ENCODE measurements at regions of chr4 and their contacts with region 1.

Region 1: DNA sequence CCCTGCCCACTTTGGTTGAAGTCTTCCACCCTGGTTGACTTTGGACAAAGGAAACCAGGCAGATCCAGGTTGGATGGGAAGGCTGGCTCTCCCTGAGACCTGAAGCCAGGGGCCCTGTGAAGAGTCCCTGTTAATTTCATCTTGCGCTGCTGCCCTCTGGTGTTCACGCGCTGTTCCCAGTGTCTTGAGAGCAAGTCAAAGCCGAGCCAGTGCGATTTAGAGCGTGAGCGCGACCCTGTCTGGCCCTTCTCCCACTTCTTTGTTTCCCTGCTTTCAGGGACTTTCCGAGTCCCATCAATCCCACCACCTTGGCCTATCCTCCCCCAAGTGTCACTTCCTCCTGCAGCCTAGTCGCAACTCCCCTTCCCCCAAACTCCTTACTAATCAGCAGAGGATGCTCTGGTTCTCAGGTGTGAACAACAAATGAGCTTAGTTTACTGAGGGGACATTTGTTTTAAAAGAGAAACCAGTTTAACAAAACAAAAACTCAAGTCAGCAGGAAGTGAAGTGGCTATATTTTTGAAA is 25.8 kb upstream of the CHRNA9 start:
- DNase-seq: peak; percentile 84 to 93 (median 86)
- H3K4me3 ChIP-seq: peak overlapping the region in 1 of 2 donors; percentile 43
- H3K4me3 Mint-ChIP-seq: peak overlapping the region; percentile 74 to 92 (median 85)
- H3K27ac ChIP-seq: peak overlapping the region; percentile 74
- H3K27ac Mint-ChIP-seq: peak overlapping the region; percentile 93 to 99 (median 98)
- H3K4me1 ChIP-seq: peaks cover 79% of the 10 kb centered on the region
- H3K4me1 Mint-ChIP-seq: peaks cover 57 to 82% (median 67%) of the 10 kb centered on the region in 4 donors
- H3K27me3 ChIP-seq: no peaks in the 10 kb centered on the region
- H3K27me3 Mint-ChIP-seq: no peaks in the 10 kb centered on the region

Region 2: GRCh38 chr4:39638354-39639240 is 670.7 kb before region 1 on chr4 and contains the start of gene SMIM14:
- CTCF ChIA-PET with region 1: no interaction called
- POLR2A ChIA-PET with region 1: no interaction called
- intact Hi-C with region 1: no loop called
- DNase-seq: peak; percentile 84 to 91 (median 86)
- H3K4me3 ChIP-seq: peak within 1 kb of the TSS; percentile 52 to 95
- H3K4me3 Mint-ChIP-seq: peak within 1 kb of the TSS; percentile 87 to 99 (median 92)
- H3K27ac ChIP-seq: peak within 1 kb of the TSS; percentile 77
- H3K27ac Mint-ChIP-seq: peak within 1 kb of the TSS; percentile 74 to 98 (median 96)
- H3K4me1 ChIP-seq: peaks cover 27% of the 10 kb centered on the region
- H3K4me1 Mint-ChIP-seq: peaks cover 20 to 54% (median 32%) of the 10 kb centered on the region in 4 donors
- H3K27me3 ChIP-seq: no peaks in the 10 kb centered on the region
- H3K27me3 Mint-ChIP-seq: no peaks in the 10 kb centered on the region
- total RNA-seq, gene SMIM14: 15.5 to 19.4 TPM

Region 3: GRCh38 chr4:39977489-39978377 is 331.6 kb before region 1 on chr4 and contains the start of gene PDS5A:
- CTCF ChIA-PET with region 1: no interaction called
- POLR2A ChIA-PET with region 1: no interaction called
- intact Hi-C with region 1: loop called (anchors 5 kb)
- DNase-seq: peak; percentile 86 to 95 (median 91)
- H3K4me3 ChIP-seq: peak within 1 kb of the TSS; percentile 22 to 66
- H3K4me3 Mint-ChIP-seq: peak within 1 kb of the TSS; percentile 87 to 92 (median 90)
- H3K27ac ChIP-seq: peak within 1 kb of the TSS; percentile 92
- H3K27ac Mint-ChIP-seq: peak within 1 kb of the TSS; percentile 95 to 97 (median 96)
- H3K4me1 ChIP-seq: peaks cover 39% of the 10 kb centered on the region
- H3K4me1 Mint-ChIP-seq: peaks cover 23 to 40% (median 31%) of the 10 kb centered on the region in 4 donors
- H3K27me3 ChIP-seq: no peaks in the 10 kb centered on the region
- H3K27me3 Mint-ChIP-seq: no peaks in the 10 kb centered on the region
- total RNA-seq, gene PDS5A: 96.9 to 97.6 TPM

Region 4: GRCh38 chr4:40185830-40186664 is 123.3 kb before region 1 on chr4:
- CTCF ChIA-PET with region 1: interaction called, 12 read pairs
- POLR2A ChIA-PET with region 1: interaction called, 24 read pairs
- intact Hi-C with region 1: no loop called
- DNase-seq: no peak
- H3K4me3 ChIP-seq: no peak overlapping the region
- H3K4me3 Mint-ChIP-seq: peak overlapping the region in 2 of 8 donors; percentile 20 to 26
- H3K27ac ChIP-seq: no peak overlapping the region
- H3K27ac Mint-ChIP-seq: peak overlapping the region in 3 of 7 donors; percentile 32 to 71 (median 57)
- H3K4me1 ChIP-seq: peaks cover 44% of the 10 kb centered on the region
- H3K4me1 Mint-ChIP-seq: peaks cover 31 to 45% (median 36%) of the 10 kb centered on the region in 4 donors
- H3K27me3 ChIP-seq: no peaks in the 10 kb centered on the region
- H3K27me3 Mint-ChIP-seq: no peaks in the 10 kb centered on the region

Region 5: DNA sequence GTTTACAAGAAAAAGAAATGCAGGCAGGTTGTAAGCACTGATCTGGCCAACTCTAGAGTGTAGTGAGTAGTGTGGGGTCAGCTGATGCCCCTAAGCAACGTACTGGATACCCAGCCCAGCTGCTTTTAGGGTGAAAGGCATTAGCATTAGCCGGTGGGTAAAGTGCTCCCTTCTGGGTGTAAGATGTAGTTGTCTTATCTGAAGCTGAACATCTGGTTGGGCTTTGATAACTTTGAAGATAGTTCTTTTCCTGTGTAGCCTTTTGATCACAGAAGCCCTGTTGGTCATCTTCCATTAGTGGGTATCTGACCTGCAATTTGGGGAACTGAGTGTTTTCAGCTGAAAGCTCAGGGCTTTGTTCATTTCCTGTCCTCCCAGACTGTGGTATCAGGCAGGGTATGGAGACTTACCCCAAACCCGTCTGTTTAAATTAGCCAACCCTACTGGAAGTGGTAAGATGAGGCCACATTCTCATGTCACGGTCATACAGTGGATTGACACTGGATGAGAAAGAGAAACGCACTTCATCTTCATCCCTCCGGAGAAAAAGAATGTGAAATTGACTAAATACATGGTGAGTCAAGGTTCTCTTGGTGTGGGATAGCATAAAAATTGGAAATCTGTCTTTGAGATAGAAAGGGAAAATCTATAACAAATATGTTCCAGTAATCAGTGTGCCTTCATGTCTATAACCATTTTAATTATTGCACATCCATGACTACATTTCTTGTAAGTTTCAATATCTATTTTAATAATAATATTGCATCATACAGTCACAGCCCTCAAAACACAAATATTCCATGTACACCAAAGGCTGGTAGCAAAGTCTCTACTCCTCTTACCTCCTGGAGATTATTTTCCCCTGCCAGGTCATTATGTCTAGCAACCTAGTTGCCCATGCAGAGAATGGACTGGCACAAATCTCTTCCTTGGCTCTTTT is 103.8 kb before region 1 on chr4:
- CTCF ChIA-PET with region 1: interaction called, 115 read pairs
- POLR2A ChIA-PET with region 1: interaction called, 179 read pairs
- intact Hi-C with region 1: no loop called
- DNase-seq: peak in 4 of 5 donors; percentile 44 to 68 (median 49)
- H3K4me3 ChIP-seq: peak overlapping the region; percentile 39 to 67
- H3K4me3 Mint-ChIP-seq: peak overlapping the region; percentile 86 to 100 (median 96)
- H3K27ac ChIP-seq: peak overlapping the region; percentile 99
- H3K27ac Mint-ChIP-seq: peak overlapping the region; percentile 92 to 100 (median 96)
- H3K4me1 ChIP-seq: peaks cover 75% of the 10 kb centered on the region
- H3K4me1 Mint-ChIP-seq: peaks cover 48 to 87% (median 61%) of the 10 kb centered on the region in 4 donors
- H3K27me3 ChIP-seq: no peaks in the 10 kb centered on the region
- H3K27me3 Mint-ChIP-seq: no peaks in the 10 kb centered on the region

Region 6: GRCh38 chr4:40247350-40247749 is 62.0 kb before region 1 on chr4:
- CTCF ChIA-PET with region 1: interaction called, 38 read pairs
- POLR2A ChIA-PET with region 1: interaction called, 48 read pairs
- intact Hi-C with region 1: loop called (anchors 2 kb)
- DNase-seq: peak; percentile 66 to 82 (median 69)
- H3K4me3 ChIP-seq: no peak overlapping the region
- H3K4me3 Mint-ChIP-seq: peak overlapping the region in 7 of 8 donors; percentile 19 to 75 (median 58)
- H3K27ac ChIP-seq: peak overlapping the region; percentile 68
- H3K27ac Mint-ChIP-seq: peak overlapping the region; percentile 80 to 100 (median 96)
- H3K4me1 ChIP-seq: peaks cover 88% of the 10 kb centered on the region
- H3K4me1 Mint-ChIP-seq: peaks cover 65 to 92% (median 74%) of the 10 kb centered on the region in 4 donors
- H3K27me3 ChIP-seq: no peaks in the 10 kb centered on the region
- H3K27me3 Mint-ChIP-seq: no peaks in the 10 kb centered on the region

Region 7: GRCh38 chr4:40275065-40275730 is 34.1 kb before region 1 on chr4:
- CTCF ChIA-PET with region 1: interaction called, 271 read pairs
- POLR2A ChIA-PET with region 1: interaction called, 3 read pairs
- intact Hi-C with region 1: no loop called
- DNase-seq: no peak
- H3K4me3 ChIP-seq: no peak overlapping the region
- H3K4me3 Mint-ChIP-seq: peak overlapping the region in 1 of 8 donors; percentile 10
- H3K27ac ChIP-seq: no peak overlapping the region
- H3K27ac Mint-ChIP-seq: no peak overlapping the region
- H3K4me1 ChIP-seq: peaks cover 22% of the 10 kb centered on the region
- H3K4me1 Mint-ChIP-seq: peaks cover 15 to 28% (median 23%) of the 10 kb centered on the region in 4 donors
- H3K27me3 ChIP-seq: no peaks in the 10 kb centered on the region
- H3K27me3 Mint-ChIP-seq: no peaks in the 10 kb centered on the region

Region 8: GRCh38 chr4:40325189-40326019 is 16.1 kb after region 1 on chr4:
- CTCF ChIA-PET with region 1: interaction called, 99 read pairs
- POLR2A ChIA-PET with region 1: interaction called, 9 read pairs
- intact Hi-C with region 1: loop called (anchors 1 kb)
- DNase-seq: peak; percentile 75 to 83 (median 79)
- H3K4me3 ChIP-seq: no peak overlapping the region
- H3K4me3 Mint-ChIP-seq: no peak overlapping the region
- H3K27ac ChIP-seq: no peak overlapping the region
- H3K27ac Mint-ChIP-seq: peak overlapping the region in 5 of 7 donors; percentile 2 to 80 (median 48)
- H3K4me1 ChIP-seq: peaks cover 5% of the 10 kb centered on the region
- H3K4me1 Mint-ChIP-seq: peaks cover 5 to 17% (median 6%) of the 10 kb centered on the region in 4 donors
- H3K27me3 ChIP-seq: no peaks in the 10 kb centered on the region
- H3K27me3 Mint-ChIP-seq: peaks cover 0 to 6% of the 10 kb centered on the region in 2 donors